Naive thymus-derived CD4-positive, alpha-beta T cell (primary cell): ENCODE measurements at regions of chr15 and their contacts with region 1.

Region 1: GRCh38 chr15:98442379-98442833 is 205.9 kb upstream of the IGF1R start:
- DNase-seq: peak in 8 of 9 donors; percentile 24 to 59 (median 52)
- ATAC-seq: peak; percentile 84
- H3K4me3 ChIP-seq: no peak overlapping the region
- H3K4me3 Mint-ChIP-seq: no peak overlapping the region
- H3K27ac ChIP-seq: no peak overlapping the region
- H3K27ac Mint-ChIP-seq: no peak overlapping the region
- H3K4me1 ChIP-seq: no peaks in the 10 kb centered on the region
- H3K4me1 Mint-ChIP-seq: peaks cover 0 to 5% (median 0%) of the 10 kb centered on the region in 7 donors
- H3K27me3 ChIP-seq: no peaks in the 10 kb centered on the region
- H3K27me3 Mint-ChIP-seq: peaks cover 12 to 28% (median 19%) of the 10 kb centered on the region in 5 donors

Region 2: GRCh38 chr15:98658831-98659699 is 216.7 kb after region 1 on chr15:
- CTCF ChIA-PET with region 1: no interaction called
- POLR2A ChIA-PET with region 1: no interaction called
- intact Hi-C with region 1: loop called (anchors 1 kb)
- DNase-seq: peak in 7 of 9 donors; percentile 24 to 56 (median 49)
- ATAC-seq: peak; percentile 85
- H3K4me3 ChIP-seq: no peak overlapping the region
- H3K4me3 Mint-ChIP-seq: no peak overlapping the region
- H3K27ac ChIP-seq: no peak overlapping the region
- H3K27ac Mint-ChIP-seq: peak overlapping the region in 2 of 9 donors; percentile 43 to 73
- H3K4me1 ChIP-seq: peaks cover 0 to 23% of the 10 kb centered on the region in 2 donors
- H3K4me1 Mint-ChIP-seq: peaks cover 15 to 79% (median 71%) of the 10 kb centered on the region in 7 donors
- H3K27me3 ChIP-seq: no peaks in the 10 kb centered on the region
- H3K27me3 Mint-ChIP-seq: peaks cover 0 to 6% (median 0%) of the 10 kb centered on the region in 5 donors

Region 3: GRCh38 chr15:98881526-98882520 is 439.4 kb after region 1 on chr15:
- CTCF ChIA-PET with region 1: no interaction called
- POLR2A ChIA-PET with region 1: no interaction called
- intact Hi-C with region 1: loop called in 1 of 2 experiments (anchors 10 kb)
- DNase-seq: peak in 6 of 9 donors; percentile 19 to 52 (median 38)
- ATAC-seq: peak; percentile 72
- H3K4me3 ChIP-seq: no peak overlapping the region
- H3K4me3 Mint-ChIP-seq: peak overlapping the region in 1 of 10 donors; percentile 39
- H3K27ac ChIP-seq: no peak overlapping the region
- H3K27ac Mint-ChIP-seq: peak overlapping the region in 3 of 9 donors; percentile 19 to 74 (median 65)
- H3K4me1 ChIP-seq: peaks cover 0 to 8% of the 10 kb centered on the region in 2 donors
- H3K4me1 Mint-ChIP-seq: peaks cover 6 to 73% (median 54%) of the 10 kb centered on the region in 7 donors
- H3K27me3 ChIP-seq: no peaks in the 10 kb centered on the region
- H3K27me3 Mint-ChIP-seq: no peaks in the 10 kb centered on the region

Region 4: GRCh38 chr15:99059010-99059981 is 616.9 kb after region 1 on chr15:
- CTCF ChIA-PET with region 1: interaction called, 4 read pairs
- POLR2A ChIA-PET with region 1: no interaction called
- intact Hi-C with region 1: loop called (anchors 1 kb)
- DNase-seq: peak in 8 of 9 donors; percentile 14 to 75 (median 50)
- ATAC-seq: peak; percentile 85
- H3K4me3 ChIP-seq: peak overlapping the region; percentile 50
- H3K4me3 Mint-ChIP-seq: peak overlapping the region; percentile 66 to 83 (median 70)
- H3K27ac ChIP-seq: no peak overlapping the region
- H3K27ac Mint-ChIP-seq: no peak overlapping the region
- H3K4me1 ChIP-seq: peaks cover 0 to 3% of the 10 kb centered on the region in 2 donors
- H3K4me1 Mint-ChIP-seq: peaks cover 0 to 14% (median 8%) of the 10 kb centered on the region in 7 donors
- H3K27me3 ChIP-seq: peaks cover 0 to 18% of the 10 kb centered on the region in 2 donors
- H3K27me3 Mint-ChIP-seq: peaks cover 29 to 59% (median 37%) of the 10 kb centered on the region in 5 donors

Region 5: DNA sequence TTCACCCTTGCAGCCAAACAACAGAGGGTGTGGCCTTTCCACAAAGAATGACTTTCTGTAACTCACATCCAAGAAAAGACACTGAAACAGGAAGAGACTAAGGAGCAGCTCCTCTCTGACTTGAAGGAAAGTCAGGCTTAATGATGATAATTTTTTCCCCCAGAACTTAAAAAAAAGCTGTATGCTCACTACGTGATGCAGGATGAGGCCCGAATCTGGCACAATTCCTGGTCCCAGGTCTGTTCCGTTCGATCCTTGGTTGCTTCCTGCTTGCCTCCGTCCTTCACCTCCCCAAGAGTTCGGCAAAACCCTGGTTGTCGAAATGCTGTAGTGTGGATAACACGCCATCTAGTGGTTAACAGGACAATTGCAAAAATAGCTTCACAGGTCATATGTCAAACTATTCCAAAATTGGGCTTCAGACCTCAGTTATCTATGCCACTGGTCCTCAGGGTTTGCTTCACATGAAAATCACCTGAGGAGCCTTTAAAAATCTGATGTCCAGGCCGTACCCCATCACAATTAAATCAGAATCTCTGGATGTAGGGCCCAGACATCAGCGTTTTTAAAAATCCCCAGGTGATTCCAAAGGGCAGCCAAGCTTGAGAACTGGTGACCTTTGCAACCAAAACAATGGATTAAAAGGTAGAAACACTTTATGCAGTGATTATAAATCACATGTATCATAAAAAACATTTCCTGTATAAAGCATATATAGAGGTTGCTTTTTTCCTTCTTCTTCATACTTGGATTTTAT is 634.3 kb after region 1 on chr15:
- CTCF ChIA-PET with region 1: interaction called, 3 read pairs
- POLR2A ChIA-PET with region 1: no interaction called
- intact Hi-C with region 1: loop called in 1 of 2 experiments (anchors 1 kb)
- DNase-seq: peak in 8 of 9 donors; percentile 20 to 65 (median 56)
- ATAC-seq: peak; percentile 89
- H3K4me3 ChIP-seq: peak overlapping the region; percentile 25
- H3K4me3 Mint-ChIP-seq: peak overlapping the region; percentile 73 to 92 (median 83)
- H3K27ac ChIP-seq: no peak overlapping the region
- H3K27ac Mint-ChIP-seq: peak overlapping the region in 4 of 9 donors; percentile 1 to 74 (median 57)
- H3K4me1 ChIP-seq: no peaks in the 10 kb centered on the region
- H3K4me1 Mint-ChIP-seq: peaks cover 0 to 8% (median 4%) of the 10 kb centered on the region in 7 donors
- H3K27me3 ChIP-seq: no peaks in the 10 kb centered on the region
- H3K27me3 Mint-ChIP-seq: peaks cover 7 to 26% (median 23%) of the 10 kb centered on the region in 5 donors